KBM-7 (cell line): ENCODE measurements at regions of chr5 and their contacts with region 1.

Region 1: DNA sequence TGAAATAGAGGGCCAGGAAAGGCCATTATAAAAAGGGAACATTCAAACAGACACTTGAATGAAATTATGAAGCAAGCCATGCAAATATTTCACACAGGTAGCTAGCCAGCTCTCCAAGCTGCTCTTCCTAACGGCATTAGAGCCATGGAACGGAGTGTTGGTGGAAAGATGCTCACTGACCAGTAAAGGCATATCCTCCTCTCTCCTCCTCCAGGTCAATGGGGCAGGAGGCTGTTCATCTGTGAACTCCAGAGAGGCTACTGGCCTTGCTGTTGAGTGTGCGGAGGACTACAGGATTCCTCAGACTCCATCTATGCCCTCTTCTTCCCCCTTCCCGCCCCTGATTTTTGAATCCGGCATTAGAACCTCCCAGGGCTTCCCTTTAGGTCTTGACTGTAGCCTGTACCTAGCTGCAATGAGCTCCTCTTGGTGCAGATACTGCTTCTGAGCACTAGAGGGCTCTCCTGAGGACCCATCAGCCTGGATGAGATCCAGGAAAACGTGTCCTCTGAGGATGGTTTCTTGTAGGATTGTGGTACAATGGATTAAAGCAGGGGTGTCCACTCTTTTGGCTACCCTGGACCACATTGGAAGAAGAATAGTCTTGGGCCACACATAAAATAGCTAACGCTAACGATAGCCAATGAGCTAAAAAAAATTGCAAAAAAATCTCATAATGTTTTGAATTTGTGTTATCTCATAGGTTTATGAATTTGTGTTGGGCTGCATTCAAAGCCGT is 162.2 kb downstream of the SREK1 start:
- DNase-seq: peak; percentile 64

Region 2: GRCh38 chr5:66080664-66081063 is 225.6 kb before region 1 on chr5:
- in situ Hi-C with region 1: no loop called
- DNase-seq: no peak

Region 3: GRCh38 chr5:66540078-66540477 is 233.8 kb after region 1 on chr5:
- in situ Hi-C with region 1: no loop called
- DNase-seq: no peak

Region 4: GRCh38 chr5:66757188-66757833 is 451.0 kb after region 1 on chr5:
- in situ Hi-C with region 1: loop called (anchors 25 kb)
- DNase-seq: peak; percentile 27